ENCODE measurements at regions of chr7 and their contacts with region 1.

Region 1: DNA sequence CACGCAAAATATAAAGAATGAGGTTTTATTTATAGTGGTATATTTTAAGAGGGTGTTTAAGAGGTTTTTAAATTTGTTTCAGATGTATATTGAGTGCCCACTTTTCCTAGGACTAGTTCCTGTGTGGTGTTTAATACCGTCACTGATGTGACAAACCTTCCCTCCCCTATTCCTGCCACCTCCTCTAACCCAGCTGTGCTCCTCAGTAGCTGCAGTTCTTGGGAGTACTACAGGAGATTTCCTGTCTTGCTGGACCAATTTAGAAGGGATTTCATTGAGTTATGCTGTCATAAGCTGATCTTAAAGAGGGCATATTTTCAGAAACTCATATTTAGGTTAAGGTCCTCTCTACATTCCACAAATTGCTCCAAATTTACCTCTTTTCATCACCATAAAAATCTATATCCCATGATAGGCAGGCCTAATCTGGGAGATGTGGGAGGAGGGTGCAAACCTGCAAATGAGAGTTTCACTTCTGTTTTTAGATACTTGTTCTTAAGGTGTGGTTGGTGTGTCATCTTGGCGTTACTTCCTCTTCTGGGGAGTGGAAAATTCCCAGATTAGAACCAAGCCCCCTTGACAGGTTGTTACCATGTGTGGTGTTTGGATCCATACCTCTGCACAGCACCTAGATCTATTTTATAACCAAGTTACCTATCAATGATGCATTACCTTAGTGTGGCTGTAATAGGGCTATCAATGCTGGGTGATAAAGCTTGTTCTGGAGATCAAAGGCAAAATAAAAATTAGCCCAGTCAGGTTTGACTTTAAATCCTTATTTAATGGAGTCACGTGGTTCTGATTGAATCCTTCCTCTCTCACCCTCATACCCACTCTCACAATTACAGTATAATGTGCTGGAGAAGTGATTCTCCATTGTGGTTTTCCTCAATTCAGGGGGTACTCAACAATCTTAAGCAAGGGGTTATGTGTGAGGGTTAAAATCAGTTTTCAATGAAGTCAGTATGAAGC is 141.1 kb downstream of the CDK14 start:
- DNase-seq: no peak
- ATAC-seq: peak; percentile 92
- H3K4me3 Mint-ChIP-seq: peak overlapping the region; percentile 59
- H3K27ac Mint-ChIP-seq: peak overlapping the region; percentile 95
- H3K4me1 Mint-ChIP-seq: peaks cover 88% of the 10 kb centered on the region
- H3K27me3 Mint-ChIP-seq: no peaks in the 10 kb centered on the region
- CTCF ChIP-seq: no peak

Region 2: DNA sequence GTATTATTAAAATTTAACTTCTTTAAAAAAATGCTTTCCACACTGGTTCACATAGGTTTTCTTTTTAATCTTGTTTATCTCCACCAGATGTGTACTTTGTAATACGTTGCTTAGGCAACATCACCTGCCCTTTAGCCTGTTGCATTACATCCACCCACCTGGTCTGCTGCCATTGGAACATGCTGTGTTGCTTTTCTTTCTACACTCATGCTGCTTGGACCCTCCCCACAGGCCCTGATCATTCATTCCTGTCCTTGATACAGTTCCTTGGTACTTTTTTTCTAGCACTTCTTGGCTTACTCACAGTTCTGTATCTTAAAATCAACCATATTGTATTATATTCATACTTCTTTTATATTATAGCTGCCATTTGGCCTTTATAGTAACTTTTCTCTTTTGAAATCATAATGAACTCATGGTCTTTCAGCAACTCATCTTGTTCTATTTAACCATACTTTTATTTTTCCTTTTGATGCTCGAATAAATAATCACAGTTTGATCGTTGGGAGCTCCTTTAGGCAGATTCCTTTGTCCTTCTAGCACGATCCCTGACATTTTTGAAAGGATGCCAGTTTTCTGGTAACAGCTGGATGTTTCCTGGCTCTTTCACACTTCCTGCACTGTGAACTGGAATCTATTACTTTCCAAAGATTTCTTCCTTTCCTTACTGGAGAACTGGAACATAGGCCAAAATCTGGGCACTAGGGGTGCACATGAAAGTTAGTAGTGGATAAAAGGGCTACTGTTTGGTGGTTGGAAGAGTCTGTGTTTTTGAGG is 16.1 kb before region 1 on chr7:
- CTCF ChIA-PET with region 1: interaction called, 3 read pairs
- POLR2A ChIA-PET with region 1: interaction called, 3 read pairs
- intact Hi-C with region 1: loop called (anchors 2 kb)
- DNase-seq: no peak
- ATAC-seq: peak; percentile 43
- H3K4me3 Mint-ChIP-seq: no peak overlapping the region
- H3K27ac Mint-ChIP-seq: peak overlapping the region; percentile 70
- H3K4me1 Mint-ChIP-seq: peaks cover 88% of the 10 kb centered on the region
- H3K27me3 Mint-ChIP-seq: no peaks in the 10 kb centered on the region
- CTCF ChIP-seq: no peak

Region 3: DNA sequence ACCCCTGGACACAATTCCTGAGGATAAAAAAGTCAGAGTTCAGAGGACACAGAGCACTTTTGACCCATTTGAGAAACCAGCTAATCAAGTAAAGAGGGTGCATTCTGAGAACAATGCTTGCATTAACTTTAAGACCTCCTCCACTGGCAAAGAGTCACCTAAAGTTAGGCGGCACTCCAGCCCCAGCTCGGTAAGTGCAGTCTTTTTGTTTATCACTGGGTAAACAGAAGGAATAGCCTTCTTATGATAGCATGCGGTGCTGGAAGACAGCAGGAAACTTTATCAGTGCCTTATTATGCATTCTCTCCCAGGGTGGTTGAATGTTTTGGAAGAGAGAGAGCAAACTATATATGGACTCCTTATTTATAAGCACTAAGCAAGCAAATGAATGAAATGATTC is 10.6 kb before region 1 on chr7:
- CTCF ChIA-PET with region 1: interaction called, 3 read pairs
- POLR2A ChIA-PET with region 1: interaction called, 3 read pairs
- intact Hi-C with region 1: loop called (anchors 1 kb)
- DNase-seq: no peak
- ATAC-seq: no peak
- H3K4me3 Mint-ChIP-seq: peak overlapping the region; percentile 74
- H3K27ac Mint-ChIP-seq: peak overlapping the region; percentile 90
- H3K4me1 Mint-ChIP-seq: peaks cover 94% of the 10 kb centered on the region
- H3K27me3 Mint-ChIP-seq: no peaks in the 10 kb centered on the region
- CTCF ChIP-seq: no peak

Region 4: GRCh38 chr7:90772410-90772809 is 35.2 kb after region 1 on chr7:
- CTCF ChIA-PET with region 1: no interaction called
- POLR2A ChIA-PET with region 1: no interaction called
- intact Hi-C with region 1: loop called (anchors 1 kb)
- DNase-seq: peak; percentile 30
- ATAC-seq: peak; percentile 91
- H3K4me3 Mint-ChIP-seq: peak overlapping the region; percentile 36
- H3K27ac Mint-ChIP-seq: peak overlapping the region; percentile 89
- H3K4me1 Mint-ChIP-seq: peaks cover 37% of the 10 kb centered on the region
- H3K27me3 Mint-ChIP-seq: no peaks in the 10 kb centered on the region
- CTCF ChIP-seq: no peak

Region 5: GRCh38 chr7:91351374-91351773 is 614.1 kb after region 1 on chr7:
- CTCF ChIA-PET with region 1: no interaction called
- POLR2A ChIA-PET with region 1: no interaction called
- intact Hi-C with region 1: no loop called
- DNase-seq: no peak
- ATAC-seq: no peak
- H3K4me3 Mint-ChIP-seq: no peak overlapping the region
- H3K27ac Mint-ChIP-seq: no peak overlapping the region
- H3K4me1 Mint-ChIP-seq: peaks cover 3% of the 10 kb centered on the region
- H3K27me3 Mint-ChIP-seq: peaks cover 2% of the 10 kb centered on the region
- CTCF ChIP-seq: no peak